SK-N-SH (cell line): ENCODE measurements at regions of chr16 and their contacts with region 1.

Region 1: GRCh38 chr16:72832621-72833248 is 215.2 kb downstream of the ZFHX3 start:
- DNase-seq: peak; percentile 84
- H3K4me3 ChIP-seq: peak overlapping the region in 1 of 2 experiments; percentile 43; a peak in 1 of 4 replicates
- H3K27ac ChIP-seq: peak overlapping the region; percentile 34 to 75; a peak in 3 of 4 replicates
- H3K4me1 ChIP-seq: peaks cover 3 to 13% of the 10 kb centered on the region in 2 experiments; a peak in 3 of 4 replicates
- H3K27me3 ChIP-seq: no peaks in the 10 kb centered on the region
- CTCF ChIP-seq: peak; percentile 99
- EP300 ChIP-seq: 0 out of 4 replicates have a peak, but pooled peaks of 1 of the 2 experiments have one; percentile 13
- RAD21 ChIP-seq: peak; percentile 96

Region 2: GRCh38 chr16:72764015-72764654 is 68.6 kb before region 1 on chr16:
- CTCF ChIA-PET with region 1: no interaction called
- POLR2A ChIA-PET with region 1: no interaction called
- DNase-seq: no peak
- H3K4me3 ChIP-seq: no peak overlapping the region
- H3K27ac ChIP-seq: peak overlapping the region in 1 of 2 experiments; percentile 67; a peak in 2 of 4 replicates
- H3K4me1 ChIP-seq: peaks cover 0 to 20% of the 10 kb centered on the region in 2 experiments; a peak in 3 of 4 replicates
- H3K27me3 ChIP-seq: no peaks in the 10 kb centered on the region
- CTCF ChIP-seq: no peak
- EP300 ChIP-seq: peak in 1 of 2 experiments; percentile 73; a peak in 2 of 4 replicates
- RAD21 ChIP-seq: no peak

Region 3: DNA sequence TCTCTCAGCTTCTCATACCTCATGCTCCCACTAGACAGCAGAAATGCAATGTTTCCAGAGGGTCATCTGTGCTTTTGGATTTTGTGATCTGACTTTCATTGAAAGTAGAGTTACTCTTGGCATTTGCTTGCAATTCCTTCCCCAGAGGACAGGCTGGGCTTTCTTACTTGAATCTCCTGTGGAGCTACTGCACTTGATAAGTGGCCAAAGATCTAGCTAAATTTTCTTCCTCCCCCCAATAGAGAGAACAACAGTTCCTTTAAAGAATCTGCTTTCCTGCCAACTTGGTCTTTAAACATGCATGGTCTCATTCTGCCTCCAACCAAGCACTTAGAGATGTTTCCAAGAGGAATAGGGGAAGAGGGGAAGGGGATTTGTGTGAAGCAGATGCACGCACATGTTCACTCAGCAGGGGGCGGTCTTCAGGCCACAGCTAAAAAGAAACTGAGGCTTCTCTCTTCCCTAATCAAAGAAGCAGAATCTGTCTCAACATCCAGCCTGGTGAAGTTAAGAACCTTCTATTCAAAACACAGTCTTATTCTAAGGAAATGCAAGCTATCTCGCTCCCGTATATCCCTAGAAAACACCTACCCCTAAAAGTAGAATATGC is 14.4 kb before region 1 on chr16:
- CTCF ChIA-PET with region 1: interaction called, 23 read pairs
- POLR2A ChIA-PET with region 1: interaction called, 4 read pairs
- DNase-seq: no peak
- H3K4me3 ChIP-seq: no peak overlapping the region
- H3K27ac ChIP-seq: no peak overlapping the region
- H3K4me1 ChIP-seq: peaks cover 14 to 26% of the 10 kb centered on the region in 2 experiments
- H3K27me3 ChIP-seq: no peaks in the 10 kb centered on the region
- CTCF ChIP-seq: peak; percentile 34
- EP300 ChIP-seq: no peak
- RAD21 ChIP-seq: no peak

Region 4: GRCh38 chr16:72947379-72948237 is 114.9 kb after region 1 on chr16:
- CTCF ChIA-PET with region 1: interaction called, 12 read pairs
- POLR2A ChIA-PET with region 1: no interaction called
- DNase-seq: peak; percentile 90
- H3K4me3 ChIP-seq: no peak overlapping the region
- H3K27ac ChIP-seq: peak overlapping the region in 1 of 2 experiments; percentile 94; a peak in 2 of 4 replicates
- H3K4me1 ChIP-seq: peaks cover 14 to 48% of the 10 kb centered on the region in 2 experiments; a peak in 3 of 4 replicates
- H3K27me3 ChIP-seq: no peaks in the 10 kb centered on the region
- CTCF ChIP-seq: no peak
- EP300 ChIP-seq: peak in 1 of 2 experiments; percentile 82; a peak in 2 of 4 replicates
- RAD21 ChIP-seq: peak; percentile 32

Region 5: DNA sequence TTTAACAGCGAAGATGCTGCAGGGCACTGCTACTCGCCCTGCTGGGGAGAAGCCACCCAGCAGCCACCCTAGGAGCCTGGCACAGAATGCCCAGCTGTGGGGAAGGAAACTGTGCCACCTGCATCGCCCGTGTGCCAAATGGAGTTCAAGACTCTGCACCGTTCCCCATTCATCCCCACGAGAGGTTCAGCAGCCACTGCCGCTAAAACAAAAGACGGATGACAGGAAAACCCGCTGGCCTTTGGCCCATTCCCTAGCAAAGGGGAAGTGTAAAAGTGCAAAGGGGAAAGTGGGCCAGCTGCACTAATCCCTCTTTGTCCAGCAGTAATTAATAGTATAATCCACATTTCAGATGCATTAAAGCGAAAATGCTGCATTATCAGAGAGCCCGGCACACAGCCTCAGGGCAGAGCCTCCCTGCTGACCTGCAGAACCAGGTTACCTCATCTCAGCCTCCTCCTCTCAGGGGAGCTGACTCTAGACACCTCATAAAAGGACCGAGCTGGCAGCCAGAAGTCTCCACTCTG is 177.5 kb after region 1 on chr16:
- CTCF ChIA-PET with region 1: interaction called, 13 read pairs
- POLR2A ChIA-PET with region 1: no interaction called
- DNase-seq: peak; percentile 80
- H3K4me3 ChIP-seq: no peak overlapping the region
- H3K27ac ChIP-seq: peak overlapping the region in 1 of 2 experiments; percentile 51; a peak in 2 of 4 replicates
- H3K4me1 ChIP-seq: peaks cover 0 to 10% of the 10 kb centered on the region in 2 experiments; a peak in 2 of 4 replicates
- H3K27me3 ChIP-seq: no peaks in the 10 kb centered on the region
- CTCF ChIP-seq: no peak
- EP300 ChIP-seq: peak in 1 of 2 experiments; percentile 63; a peak in 1 of 4 replicates
- RAD21 ChIP-seq: no peak

Region 6: GRCh38 chr16:73058221-73058615 is 225.5 kb after region 1 on chr16:
- CTCF ChIA-PET with region 1: interaction called, 12 read pairs
- POLR2A ChIA-PET with region 1: no interaction called
- DNase-seq: peak; percentile 72
- H3K4me3 ChIP-seq: peak overlapping the region; percentile 69 to 84
- H3K27ac ChIP-seq: peak overlapping the region; percentile 74 to 75; a peak in 3 of 4 replicates
- H3K4me1 ChIP-seq: peaks cover 14 to 52% of the 10 kb centered on the region in 2 experiments
- H3K27me3 ChIP-seq: no peaks in the 10 kb centered on the region
- CTCF ChIP-seq: no peak
- EP300 ChIP-seq: no peak
- RAD21 ChIP-seq: no peak

Region 7: DNA sequence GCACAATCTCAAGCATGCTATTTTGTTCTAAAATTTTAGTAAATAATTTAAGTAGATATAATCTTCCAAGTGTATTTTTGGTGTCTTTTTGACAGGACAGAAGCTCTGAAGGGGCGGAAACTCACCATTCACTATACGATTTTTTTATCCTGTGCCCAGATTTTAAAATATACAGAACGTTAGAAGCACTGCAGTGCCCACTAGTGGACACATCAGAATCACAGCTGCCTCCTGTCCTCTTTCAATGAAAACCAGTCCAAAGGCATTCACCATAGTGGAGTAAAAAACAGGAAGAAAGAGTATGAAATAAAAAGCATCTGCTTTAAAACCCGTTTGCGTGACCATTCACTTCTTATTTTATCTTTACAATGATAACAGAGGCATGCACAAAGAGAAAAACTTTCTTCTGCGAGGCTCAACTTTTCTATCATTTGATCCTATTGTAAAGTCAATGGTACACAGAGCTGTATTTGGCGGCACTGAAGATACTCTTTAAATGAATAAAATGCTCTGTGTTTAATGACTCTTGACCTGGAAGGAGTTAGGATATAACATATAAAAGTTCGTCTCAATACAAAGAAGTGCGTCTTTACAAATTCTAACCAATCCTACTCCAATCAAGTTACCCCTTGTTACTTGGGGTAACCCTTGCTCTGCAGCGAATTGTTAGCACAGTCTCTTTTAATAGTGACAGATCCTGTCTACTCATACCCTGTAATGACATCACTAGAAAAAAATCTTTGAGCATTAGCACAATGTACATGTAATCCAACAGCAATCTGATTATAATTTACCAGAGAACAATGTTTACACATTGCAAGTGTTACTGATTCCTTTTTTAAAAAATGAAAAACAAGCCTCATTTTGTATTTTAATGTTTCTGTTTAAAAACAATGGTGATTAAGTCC is 1124.1 kb after region 1 on chr16:
- CTCF ChIA-PET with region 1: interaction called, 15 read pairs
- POLR2A ChIA-PET with region 1: no interaction called
- DNase-seq: peak; percentile 65
- H3K4me3 ChIP-seq: no peak overlapping the region
- H3K27ac ChIP-seq: no peak overlapping the region
- H3K4me1 ChIP-seq: no peaks in the 10 kb centered on the region; a peak in 2 of 4 replicates
- H3K27me3 ChIP-seq: no peaks in the 10 kb centered on the region
- CTCF ChIP-seq: peak; percentile 95
- EP300 ChIP-seq: no peak
- RAD21 ChIP-seq: peak; percentile 91